ENCODE measurements at regions of chr13 and their contacts with region 1.

Region 1: DNA sequence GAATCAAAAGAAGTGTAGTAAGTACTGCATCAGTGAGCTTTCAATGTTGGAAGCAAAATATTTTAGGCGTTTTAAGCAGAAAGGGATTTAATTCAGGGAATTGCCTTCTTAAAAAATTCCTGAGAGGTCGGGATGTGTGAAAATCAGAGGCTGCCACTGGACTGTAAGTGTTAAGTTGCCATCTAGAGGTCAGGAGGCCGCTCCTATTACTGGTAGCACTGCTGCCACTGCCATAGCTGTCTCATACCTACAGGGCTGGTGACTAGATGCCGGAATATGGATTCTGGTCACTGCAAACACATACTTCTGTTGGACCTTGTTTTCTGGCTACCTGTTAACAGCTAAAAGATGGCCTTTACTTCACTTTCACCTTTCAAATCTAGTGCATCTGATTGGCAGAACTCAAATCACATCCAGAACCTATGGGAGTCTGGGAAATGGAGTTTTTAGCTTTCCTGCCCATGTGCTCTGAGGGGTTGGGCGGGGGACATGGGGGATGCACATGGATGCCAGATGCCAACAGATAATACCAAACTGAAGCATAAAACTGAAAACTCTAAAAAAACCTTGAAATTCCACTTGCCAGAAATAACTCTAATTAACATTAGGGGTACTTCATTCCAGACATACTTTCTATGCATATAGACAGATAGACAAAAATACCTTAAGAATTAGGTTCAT is 29.8 kb downstream of the DGKH start:
- ATAC-seq: peak in 3 of 8 experiments; percentile 43 to 99 (median 96)
- H3K4me3 ChIP-seq: no peak overlapping the region
- H3K27ac ChIP-seq: no peak overlapping the region
- H3K4me1 ChIP-seq: no peaks in the 10 kb centered on the region

Region 2: DNA sequence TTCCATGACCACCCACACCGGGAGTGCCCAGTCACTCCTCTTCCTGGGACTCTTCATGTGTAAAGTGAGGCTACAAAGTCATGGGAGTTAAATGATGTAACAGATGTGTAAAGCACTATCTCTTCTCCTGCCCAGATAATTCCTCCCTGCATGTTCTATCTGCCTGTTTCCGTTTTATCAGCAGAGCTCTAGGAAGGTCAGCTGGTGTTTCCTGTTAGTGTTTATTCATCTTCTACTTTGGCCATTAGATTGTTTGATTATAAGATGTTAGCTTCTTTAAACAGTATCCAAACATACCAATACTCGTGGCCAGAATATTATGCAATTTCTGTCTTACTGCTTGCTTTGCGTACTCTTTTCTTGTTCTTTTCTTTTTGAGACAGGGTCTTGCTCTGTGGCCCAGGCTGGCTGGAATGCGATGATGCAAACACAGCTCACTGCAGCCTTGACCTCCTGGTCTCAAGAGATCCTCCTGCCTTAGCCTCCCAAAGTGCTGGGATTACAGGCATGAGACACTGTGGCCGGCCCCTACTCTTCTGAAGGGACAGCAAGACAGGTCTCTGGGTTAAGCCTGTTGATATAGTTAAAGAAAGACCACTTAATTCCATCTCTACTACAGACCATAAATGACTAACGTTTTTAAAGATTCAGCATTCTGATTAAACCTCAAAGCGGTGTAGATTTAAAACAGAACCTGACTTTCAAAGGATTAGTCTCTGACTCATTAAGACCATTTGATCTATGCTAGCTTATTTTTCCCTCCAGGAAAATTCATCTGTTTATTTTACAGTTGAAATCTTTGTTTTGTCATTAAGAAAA is 96.3 kb after region 1 on chr13:
- in situ Hi-C with region 1: loop called in 1 of 9 experiments (anchors 25 kb)
- ATAC-seq: no peak
- H3K4me3 ChIP-seq: no peak overlapping the region
- H3K27ac ChIP-seq: no peak overlapping the region
- H3K4me1 ChIP-seq: no peaks in the 10 kb centered on the region

Region 3: GRCh38 chr13:42633495-42633894 is 555.2 kb after region 1 on chr13:
- in situ Hi-C with region 1: no loop called
- ATAC-seq: peak in 3 of 8 experiments; percentile 19 to 33 (median 19)
- H3K4me3 ChIP-seq: no peak overlapping the region
- H3K27ac ChIP-seq: no peak overlapping the region
- H3K4me1 ChIP-seq: no peaks in the 10 kb centered on the region

Measured in motor neuron (in vitro differentiated cells).